Natural killer cell (primary cell): ENCODE measurements at regions of chr2 and their contacts with region 1.

Region 1: DNA sequence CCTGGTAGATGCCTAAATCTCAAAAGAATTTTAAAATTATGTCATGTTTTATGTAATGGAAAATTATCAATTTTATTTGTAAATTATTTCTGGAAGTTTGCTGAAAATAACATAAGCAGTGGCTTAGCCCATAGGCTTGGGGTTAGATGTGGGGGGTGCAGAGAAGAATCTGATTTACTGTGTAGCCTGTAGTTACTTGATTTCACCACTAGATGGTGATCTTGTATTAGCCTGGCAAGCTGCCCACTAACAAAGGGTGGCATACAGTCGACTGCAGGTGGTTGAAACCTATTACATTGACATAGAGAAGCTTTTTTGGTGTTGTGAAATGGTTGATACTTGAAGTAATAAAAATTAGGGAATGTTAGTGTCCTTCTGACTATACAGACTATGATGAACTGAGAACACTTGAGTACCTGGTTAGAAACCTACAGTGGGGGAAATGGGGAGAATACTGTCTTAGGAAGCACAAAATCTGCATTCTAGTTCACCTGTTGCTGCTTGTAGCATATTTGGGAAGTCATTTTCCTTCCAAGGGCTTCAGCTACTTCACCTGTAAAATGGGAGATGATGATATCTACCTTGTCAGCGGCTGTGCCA is 191.0 kb upstream of the LHCGR start:
- DNase-seq: peak in 1 of 2 donors; percentile 58
- ATAC-seq: peak; percentile 66 to 90 (median 82)
- H3K4me3 ChIP-seq: no peak overlapping the region
- H3K4me3 Mint-ChIP-seq: no peak overlapping the region
- H3K27ac ChIP-seq: no peak overlapping the region
- H3K27ac Mint-ChIP-seq: no peak overlapping the region
- H3K4me1 ChIP-seq: no peaks in the 10 kb centered on the region
- H3K4me1 Mint-ChIP-seq: no peaks in the 10 kb centered on the region
- H3K27me3 ChIP-seq: no peaks in the 10 kb centered on the region
- H3K27me3 Mint-ChIP-seq: no peaks in the 10 kb centered on the region
- CTCF ChIP-seq: peak; percentile 79

Region 2: GRCh38 chr2:48912110-48912509 is 34.4 kb before region 1 on chr2:
- intact Hi-C with region 1: no loop called
- DNase-seq: no peak
- ATAC-seq: no peak
- H3K4me3 ChIP-seq: no peak overlapping the region
- H3K4me3 Mint-ChIP-seq: no peak overlapping the region
- H3K27ac ChIP-seq: no peak overlapping the region
- H3K27ac Mint-ChIP-seq: no peak overlapping the region
- H3K4me1 ChIP-seq: no peaks in the 10 kb centered on the region
- H3K4me1 Mint-ChIP-seq: no peaks in the 10 kb centered on the region
- H3K27me3 ChIP-seq: no peaks in the 10 kb centered on the region
- H3K27me3 Mint-ChIP-seq: no peaks in the 10 kb centered on the region
- CTCF ChIP-seq: no peak

Region 3: GRCh38 chr2:50143822-50144575 is 1197.5 kb after region 1 on chr2:
- intact Hi-C with region 1: loop called (anchors 5 kb)
- DNase-seq: peak in 1 of 2 donors; percentile 14
- ATAC-seq: peak in 2 of 3 donors; percentile 46 to 71
- H3K4me3 ChIP-seq: no peak overlapping the region
- H3K4me3 Mint-ChIP-seq: peak overlapping the region; percentile 65
- H3K27ac ChIP-seq: peak overlapping the region; percentile 25
- H3K27ac Mint-ChIP-seq: peak overlapping the region; percentile 15 to 80
- H3K4me1 ChIP-seq: no peaks in the 10 kb centered on the region
- H3K4me1 Mint-ChIP-seq: peaks cover 5 to 10% of the 10 kb centered on the region in 2 donors
- H3K27me3 ChIP-seq: no peaks in the 10 kb centered on the region
- H3K27me3 Mint-ChIP-seq: no peaks in the 10 kb centered on the region
- CTCF ChIP-seq: peak; percentile 17

Region 4: DNA sequence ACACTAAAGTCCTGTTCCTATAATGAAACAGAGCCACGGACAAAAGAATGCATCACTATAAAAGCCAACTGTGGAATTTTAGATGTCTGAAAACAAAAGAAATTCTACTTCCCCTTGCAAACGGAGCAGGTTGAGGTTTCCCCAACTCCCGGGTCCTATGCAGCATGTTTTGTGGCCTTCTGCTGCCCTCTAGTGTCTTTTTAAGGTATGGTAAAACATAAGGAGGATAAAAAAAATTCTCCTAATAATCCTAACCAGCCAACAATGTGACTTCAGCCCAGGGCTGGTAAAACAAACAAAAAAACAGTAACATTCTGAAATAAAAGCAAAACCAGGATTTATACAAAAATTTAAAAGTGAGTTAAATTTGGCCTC is 1545.9 kb after region 1 on chr2:
- intact Hi-C with region 1: loop called (anchors 2 kb)
- DNase-seq: peak in 1 of 2 donors; percentile 59
- ATAC-seq: peak; percentile 57 to 75 (median 58)
- H3K4me3 ChIP-seq: no peak overlapping the region
- H3K4me3 Mint-ChIP-seq: peak overlapping the region; percentile 49
- H3K27ac ChIP-seq: no peak overlapping the region
- H3K27ac Mint-ChIP-seq: no peak overlapping the region
- H3K4me1 ChIP-seq: peaks cover 10% of the 10 kb centered on the region
- H3K4me1 Mint-ChIP-seq: peaks cover 30 to 32% of the 10 kb centered on the region in 2 donors
- H3K27me3 ChIP-seq: no peaks in the 10 kb centered on the region
- H3K27me3 Mint-ChIP-seq: no peaks in the 10 kb centered on the region
- CTCF ChIP-seq: peak; percentile 51